K562 (cell line): ENCODE measurements at regions of chr16 and their contacts with region 1.

Region 1: GRCh38 chr16:68310761-68311511 is at the starts of genes PRMT7 and SLC7A6OS:
- DNase-seq: peak; percentile 92 to 96 (median 94)
- ATAC-seq: peak; percentile 99
- H3K4me3 ChIP-seq: peak within 1 kb of the TSS; percentile 81
- H3K27ac ChIP-seq: peak within 1 kb of the TSS; percentile 79
- H3K4me1 ChIP-seq: peaks cover 14 to 28% of the 10 kb centered on the region in 2 experiments; a peak in 4 of 5 replicates
- H3K27me3 ChIP-seq: no peaks in the 10 kb centered on the region
- CTCF ChIP-seq: no peak
- EP300 ChIP-seq: no peak
- POLR2A ChIP-seq: peak; percentile 96
- RAD21 ChIP-seq: no peak; a peak in 1 of 4 replicates
- polyA plus RNA-seq, gene PRMT7: 6.4 to 12.6 TPM
- polyA plus RNA-seq, gene SLC7A6OS: 2.7 to 4.5 TPM

Region 2: DNA sequence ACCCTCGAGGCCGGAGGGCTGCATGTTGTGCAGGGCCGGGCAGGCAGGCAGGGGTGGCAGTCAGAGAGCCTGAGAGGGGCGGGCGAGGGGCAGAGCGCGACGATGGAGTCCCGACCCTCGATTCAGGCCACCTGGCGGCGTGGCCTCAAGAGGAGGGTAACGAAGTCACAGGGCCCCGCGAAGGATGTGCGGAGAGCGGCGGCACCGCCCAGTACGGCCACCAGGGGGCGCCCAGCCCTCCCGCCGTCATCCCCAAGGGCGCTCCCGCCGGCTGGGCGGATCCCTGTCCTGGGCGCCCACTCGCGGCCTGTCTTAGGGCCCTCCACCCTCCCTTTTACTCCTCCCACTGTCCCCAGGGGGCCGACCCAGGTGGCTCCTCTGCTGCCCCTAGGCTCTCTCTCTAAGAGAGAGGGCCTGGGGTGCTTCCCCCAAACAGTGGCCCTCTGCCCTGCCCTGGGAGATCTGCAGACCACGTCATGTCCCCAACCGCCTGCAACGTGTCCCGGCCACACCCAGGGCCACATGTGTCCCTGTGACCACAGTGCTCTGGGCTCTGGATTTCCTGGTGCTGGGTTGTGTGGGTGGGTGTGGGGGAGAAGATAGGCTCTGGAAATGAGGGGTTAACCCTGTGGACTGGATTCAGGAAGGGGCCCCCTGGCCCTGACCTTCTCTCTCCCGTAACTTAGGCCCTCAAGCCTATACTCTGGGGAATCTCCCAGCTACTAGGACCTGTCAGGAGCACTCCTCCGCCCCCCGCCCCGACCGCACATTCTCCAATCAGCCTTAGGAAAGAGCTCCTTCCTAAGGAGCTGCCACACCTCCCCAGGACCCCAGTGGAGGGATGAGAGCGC is 317.5 kb before region 1 on chr16:
- CTCF ChIA-PET with region 1: no interaction called
- POLR2A ChIA-PET with region 1: no interaction called
- in situ Hi-C with region 1: loop called (anchors 10 kb)
- intact Hi-C with region 1: no loop called
- DNase-seq: peak; percentile 92 to 96 (median 94)
- ATAC-seq: peak; percentile 95
- H3K4me3 ChIP-seq: 0 out of 2 replicates have a peak overlapping the region, but pooled peaks have one; percentile 3
- H3K27ac ChIP-seq: peak overlapping the region; percentile 89
- H3K4me1 ChIP-seq: peaks cover 15 to 36% of the 10 kb centered on the region in 2 experiments
- H3K27me3 ChIP-seq: no peaks in the 10 kb centered on the region
- CTCF ChIP-seq: peak; percentile 93 to 98 (median 97)
- EP300 ChIP-seq: peak; percentile 29; the same call in 1 of the 2 replicates
- POLR2A ChIP-seq: peak; percentile 82
- RAD21 ChIP-seq: peak; percentile 88 to 89

Region 3: GRCh38 chr16:68264128-68265077 is 46.5 kb before region 1 on chr16 and contains the start of gene SLC7A6:
- CTCF ChIA-PET with region 1: interaction called, 3 read pairs
- POLR2A ChIA-PET with region 1: interaction called, 8 read pairs
- in situ Hi-C with region 1: no loop called
- intact Hi-C with region 1: loop called (anchors 1 kb)
- DNase-seq: peak; percentile 91 to 93 (median 93)
- ATAC-seq: peak; percentile 84
- H3K4me3 ChIP-seq: peak within 1 kb of the TSS; percentile 97
- H3K27ac ChIP-seq: peak within 1 kb of the TSS; percentile 95
- H3K4me1 ChIP-seq: peaks cover 20 to 28% of the 10 kb centered on the region in 2 experiments
- H3K27me3 ChIP-seq: no peaks in the 10 kb centered on the region
- CTCF ChIP-seq: peak; percentile 82 to 84 (median 84)
- EP300 ChIP-seq: no peak
- POLR2A ChIP-seq: peak; percentile 76
- RAD21 ChIP-seq: peak; percentile 46 to 68
- polyA plus RNA-seq, gene SLC7A6: 12.6 to 12.8 TPM

Region 4: DNA sequence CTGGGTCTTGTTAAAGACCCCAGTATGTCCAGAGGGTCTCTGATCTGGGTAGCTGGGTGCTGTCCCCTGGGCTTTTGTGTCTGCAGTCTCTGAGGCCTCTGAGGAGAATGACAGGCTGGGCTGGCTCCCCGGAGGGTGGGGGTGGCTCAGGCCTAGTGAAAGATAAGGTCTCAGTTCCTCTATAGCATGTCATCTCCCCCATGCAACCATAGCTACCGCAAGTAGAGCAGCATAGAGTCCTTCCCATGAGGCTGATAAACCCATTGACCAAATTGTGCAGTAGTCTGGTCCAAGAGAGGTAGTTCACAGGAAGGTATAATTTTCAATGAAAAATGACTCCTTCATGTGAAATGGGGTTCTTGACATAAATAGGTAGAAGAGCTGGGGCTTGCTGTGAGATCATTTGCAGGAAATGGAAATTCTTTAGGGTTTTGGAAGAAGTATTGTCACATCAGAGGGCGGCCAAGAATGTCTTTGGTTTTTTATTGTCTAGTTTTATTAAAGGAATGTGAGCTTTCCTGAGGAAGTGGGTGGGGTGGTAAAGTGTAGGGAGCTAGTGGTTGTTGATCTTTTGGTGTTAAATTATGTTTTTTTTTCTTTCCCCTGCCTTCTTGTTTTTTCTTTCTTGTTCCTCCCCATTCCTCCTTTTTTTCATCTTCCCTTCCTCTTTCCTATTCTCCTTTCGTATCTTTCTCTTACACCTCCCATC is 21.2 kb before region 1 on chr16:
- CTCF ChIA-PET with region 1: no interaction called
- POLR2A ChIA-PET with region 1: interaction called, 15 read pairs
- in situ Hi-C with region 1: no loop called
- intact Hi-C with region 1: no loop called
- DNase-seq: peak; percentile 61 to 88 (median 75)
- ATAC-seq: peak; percentile 98
- H3K4me3 ChIP-seq: no peak overlapping the region
- H3K27ac ChIP-seq: peak overlapping the region; percentile 62; the same call in 2 of the 3 replicates
- H3K4me1 ChIP-seq: peaks cover 14 to 22% of the 10 kb centered on the region in 2 experiments
- H3K27me3 ChIP-seq: no peaks in the 10 kb centered on the region
- CTCF ChIP-seq: no peak
- EP300 ChIP-seq: no peak; the same call in 1 of the 2 replicates
- POLR2A ChIP-seq: no peak
- RAD21 ChIP-seq: no peak

Region 5: DNA sequence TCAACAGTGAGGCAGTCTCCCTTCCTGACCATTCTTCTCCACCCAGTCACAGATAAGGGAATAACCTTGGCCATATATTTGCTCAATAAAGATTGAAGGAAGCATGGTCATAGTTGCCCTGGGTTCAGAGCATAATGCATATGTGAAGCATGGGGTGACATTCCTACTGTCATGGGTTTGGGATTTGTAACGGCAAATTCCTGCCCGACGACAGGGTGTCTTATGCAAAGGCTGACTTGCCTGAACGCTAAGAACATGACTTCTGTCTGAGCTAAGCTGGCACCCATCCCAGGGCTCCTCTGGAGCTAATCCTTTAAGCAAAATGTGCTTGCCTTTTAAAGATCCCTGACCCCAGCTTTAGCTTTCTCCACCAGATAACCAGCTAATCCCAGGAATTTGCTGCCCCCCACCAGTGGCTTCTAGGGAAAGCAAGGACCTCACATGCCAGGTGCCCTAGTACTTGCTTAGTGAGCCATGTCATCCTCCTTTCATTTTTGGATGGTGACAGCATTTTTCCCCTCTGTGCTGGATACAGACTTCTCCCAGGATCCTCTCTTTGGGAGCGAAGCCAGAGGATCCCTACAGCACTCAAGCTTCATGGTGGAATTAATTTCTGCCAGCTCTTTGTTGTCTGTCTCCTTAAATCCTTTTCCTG is 11.9 kb before region 1 on chr16:
- CTCF ChIA-PET with region 1: no interaction called
- POLR2A ChIA-PET with region 1: interaction called, 17 read pairs
- in situ Hi-C with region 1: no loop called
- intact Hi-C with region 1: no loop called
- DNase-seq: no peak
- ATAC-seq: no peak
- H3K4me3 ChIP-seq: no peak overlapping the region
- H3K27ac ChIP-seq: no peak overlapping the region; the same call in 2 of the 3 replicates
- H3K4me1 ChIP-seq: no peaks in the 10 kb centered on the region
- H3K27me3 ChIP-seq: no peaks in the 10 kb centered on the region
- CTCF ChIP-seq: no peak
- EP300 ChIP-seq: no peak
- POLR2A ChIP-seq: peak; percentile 39; the same call in 1 of the 2 replicates
- RAD21 ChIP-seq: no peak

Region 6: GRCh38 chr16:68490829-68491575 is 180.1 kb after region 1 on chr16:
- CTCF ChIA-PET with region 1: no interaction called
- POLR2A ChIA-PET with region 1: no interaction called
- in situ Hi-C with region 1: no loop called
- intact Hi-C with region 1: no loop called
- DNase-seq: no peak
- ATAC-seq: no peak
- H3K4me3 ChIP-seq: no peak overlapping the region
- H3K27ac ChIP-seq: no peak overlapping the region
- H3K4me1 ChIP-seq: no peaks in the 10 kb centered on the region
- H3K27me3 ChIP-seq: peaks cover 0 to 18% of the 10 kb centered on the region in 2 experiments; a peak in 3 of 5 replicates
- CTCF ChIP-seq: no peak
- EP300 ChIP-seq: no peak
- POLR2A ChIP-seq: no peak
- RAD21 ChIP-seq: no peak